HEK293 (cell line): ENCODE measurements at regions of chr19 and their contacts with region 1.

Region 1: GRCh38 chr19:37370880-37371661 is at the start of gene ZNF527:
- H3K4me3 ChIP-seq: peak within 1 kb of the TSS; percentile 48
- H3K27ac ChIP-seq: peak within 1 kb of the TSS; percentile 52
- H3K4me1 ChIP-seq: no peaks in the 10 kb centered on the region
- CTCF ChIP-seq: peak; percentile 91

Region 2: GRCh38 chr19:37077934-37078725 is 292.9 kb before region 1 on chr19 and contains the start of gene ZNF420:
- CTCF ChIA-PET with region 1: no interaction called
- POLR2A ChIA-PET with region 1: interaction called, 10 read pairs
- H3K4me3 ChIP-seq: peak within 1 kb of the TSS; percentile 73
- H3K27ac ChIP-seq: peak within 1 kb of the TSS; percentile 57
- H3K4me1 ChIP-seq: peaks cover 7% of the 10 kb centered on the region; the same call in 1 of the 2 replicates
- CTCF ChIP-seq: no peak; the same call in none of the 2 replicates

Region 3: GRCh38 chr19:37334179-37335071 is 36.6 kb before region 1 on chr19:
- CTCF ChIA-PET with region 1: no interaction called
- POLR2A ChIA-PET with region 1: interaction called, 49 read pairs
- H3K4me3 ChIP-seq: peak overlapping the region; percentile 57
- H3K27ac ChIP-seq: peak overlapping the region; percentile 83
- H3K4me1 ChIP-seq: peaks cover 15% of the 10 kb centered on the region
- CTCF ChIP-seq: no peak

Region 4: GRCh38 chr19:37466798-37467607 is 95.9 kb after region 1 on chr19 and contains the start of gene ZNF569:
- CTCF ChIA-PET with region 1: no interaction called
- POLR2A ChIA-PET with region 1: interaction called, 26 read pairs
- H3K4me3 ChIP-seq: peak within 1 kb of the TSS; percentile 63
- H3K27ac ChIP-seq: peak within 1 kb of the TSS; percentile 88
- H3K4me1 ChIP-seq: peaks cover 6% of the 10 kb centered on the region; the same call in 1 of the 2 replicates
- CTCF ChIP-seq: peak; percentile 88

Region 5: GRCh38 chr19:37594304-37594981 is 223.4 kb after region 1 on chr19 and contains the starts of genes ZNF540 and ZNF571:
- CTCF ChIA-PET with region 1: no interaction called
- POLR2A ChIA-PET with region 1: interaction called, 28 read pairs
- H3K4me3 ChIP-seq: peak within 1 kb of the TSS; percentile 71
- H3K27ac ChIP-seq: peak within 1 kb of the TSS; percentile 87
- H3K4me1 ChIP-seq: 0 out of 2 replicates have a peak, but pooled peaks cover 5% of the 10 kb centered on the region
- CTCF ChIP-seq: peak; percentile 58; the same call in 1 of the 2 replicates